CD4-positive, alpha-beta memory T cell (primary cell): ENCODE measurements at regions of chr14 and their contacts with region 1.

Region 1: DNA sequence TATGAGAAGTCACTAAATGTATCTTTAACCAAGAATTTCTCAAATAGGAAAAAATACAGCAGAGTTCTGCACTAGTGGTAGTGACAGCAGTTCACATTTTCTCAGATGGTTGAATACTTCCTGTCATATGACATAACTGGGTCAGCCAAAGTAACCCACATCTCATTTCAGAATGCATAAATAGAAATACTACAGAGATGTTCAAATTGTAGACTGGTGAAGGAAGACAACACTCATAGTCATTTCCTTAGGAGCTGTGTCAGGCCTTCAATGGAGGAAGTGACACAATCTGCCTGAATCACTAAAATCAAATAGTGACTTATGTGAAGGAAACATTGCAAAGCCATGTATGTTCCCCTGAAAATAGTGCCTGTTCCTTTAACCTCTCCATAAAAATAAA is 32.4 kb downstream of the FERMT2 start:
- DNase-seq: peak; percentile 55 to 82 (median 75)
- H3K4me3 ChIP-seq: no peak overlapping the region
- H3K4me3 Mint-ChIP-seq: peak overlapping the region in 3 of 8 donors; percentile 13 to 48 (median 15)
- H3K27ac ChIP-seq: peak overlapping the region; percentile 57
- H3K27ac Mint-ChIP-seq: peak overlapping the region; percentile 88 to 95 (median 93)
- H3K4me1 ChIP-seq: peaks cover 24% of the 10 kb centered on the region
- H3K4me1 Mint-ChIP-seq: peaks cover 18 to 42% (median 26%) of the 10 kb centered on the region in 4 donors
- H3K27me3 ChIP-seq: no peaks in the 10 kb centered on the region
- H3K27me3 Mint-ChIP-seq: no peaks in the 10 kb centered on the region

Region 2: GRCh38 chr14:52950898-52951689 is 32.6 kb after region 1 on chr14 and contains the start of gene FERMT2:
- CTCF ChIA-PET with region 1: interaction called, 8 read pairs
- POLR2A ChIA-PET with region 1: interaction called, 4 read pairs
- intact Hi-C with region 1: loop called (anchors 2 kb)
- DNase-seq: peak in 4 of 5 donors; percentile 6 to 25 (median 11)
- H3K4me3 ChIP-seq: peak within 1 kb of the TSS; percentile 47 to 49
- H3K4me3 Mint-ChIP-seq: peak within 1 kb of the TSS; percentile 79 to 91 (median 85)
- H3K27ac ChIP-seq: no peak within 1 kb of the TSS
- H3K27ac Mint-ChIP-seq: peak within 1 kb of the TSS in 6 of 7 donors; percentile 5 to 65 (median 37)
- H3K4me1 ChIP-seq: peaks cover 20% of the 10 kb centered on the region
- H3K4me1 Mint-ChIP-seq: peaks cover 18 to 27% (median 21%) of the 10 kb centered on the region in 4 donors
- H3K27me3 ChIP-seq: peaks cover 45% of the 10 kb centered on the region
- H3K27me3 Mint-ChIP-seq: peaks cover 34 to 36% of the 10 kb centered on the region in 2 donors
- total RNA-seq, gene FERMT2: 0.75 to 0.79 TPM